ENCODE measurements at regions of chr6 and their contacts with region 1.

Region 1: GRCh38 chr6:131112252-131112651 is 23.0 kb upstream of the AKAP7 start:
- DNase-seq: no peak
- H3K4me3 ChIP-seq: no peak overlapping the region
- H3K27ac ChIP-seq: no peak overlapping the region
- H3K4me1 ChIP-seq: no peaks in the 10 kb centered on the region
- H3K27me3 ChIP-seq: no peaks in the 10 kb centered on the region
- CTCF ChIP-seq: no peak
- POLR2A ChIP-seq: no peak

Region 2: GRCh38 chr6:130882370-130882769 is 229.9 kb before region 1 on chr6:
- intact Hi-C with region 1: loop called (anchors 5 kb)
- DNase-seq: no peak
- H3K4me3 ChIP-seq: no peak overlapping the region
- H3K27ac ChIP-seq: no peak overlapping the region
- H3K4me1 ChIP-seq: no peaks in the 10 kb centered on the region
- H3K27me3 ChIP-seq: no peaks in the 10 kb centered on the region
- CTCF ChIP-seq: no peak
- POLR2A ChIP-seq: no peak